Gastrocnemius medialis (tissue), 4 donors: ENCODE measurements at regions of chr15 and their contacts with region 1.

Region 1: GRCh38 chr15:27017168-27017809 is 46.3 kb downstream of the GABRG3 start:
- DNase-seq: no peak
- ATAC-seq: no peak
- H3K4me3 ChIP-seq: no peak overlapping the region
- H3K27ac ChIP-seq: no peak overlapping the region
- H3K4me1 ChIP-seq: no peaks in the 10 kb centered on the region
- H3K27me3 ChIP-seq: no peaks in the 10 kb centered on the region
- CTCF ChIP-seq: no peak
- POLR2A ChIP-seq: no peak

Region 2: GRCh38 chr15:26901041-26901440 is 116.2 kb before region 1 on chr15:
- in situ Hi-C with region 1: loop called in 1 of 4 experiments (anchors 25 kb)
- intact Hi-C with region 1: no loop called
- DNase-seq: no peak
- ATAC-seq: no peak
- H3K4me3 ChIP-seq: no peak overlapping the region
- H3K27ac ChIP-seq: no peak overlapping the region
- H3K4me1 ChIP-seq: no peaks in the 10 kb centered on the region
- H3K27me3 ChIP-seq: no peaks in the 10 kb centered on the region
- CTCF ChIP-seq: no peak
- POLR2A ChIP-seq: no peak

Region 3: DNA sequence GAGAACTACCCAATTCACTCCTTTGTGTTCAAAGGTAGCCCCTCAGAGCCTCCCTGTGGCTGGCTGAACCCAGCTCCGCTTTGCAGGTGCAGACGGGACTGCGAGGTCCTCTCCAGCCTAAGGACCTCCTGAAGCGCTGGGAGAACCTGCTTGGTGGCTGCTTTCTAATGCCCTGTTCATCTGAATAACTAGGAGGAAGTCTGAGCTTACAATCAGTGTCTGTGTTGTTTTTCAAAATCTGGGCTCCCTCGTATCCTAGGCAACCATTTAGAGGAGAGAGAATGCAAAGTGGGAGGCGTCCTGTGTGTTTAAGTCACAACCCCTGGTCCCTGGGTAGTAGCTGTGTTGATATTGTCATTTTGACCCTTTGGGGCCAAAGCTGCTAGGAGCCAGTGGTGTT is 53.6 kb after region 1 on chr15:
- in situ Hi-C with region 1: loop called in 1 of 4 experiments (anchors 10 kb)
- intact Hi-C with region 1: no loop called
- DNase-seq: no peak
- ATAC-seq: no peak
- H3K4me3 ChIP-seq: no peak overlapping the region
- H3K27ac ChIP-seq: no peak overlapping the region
- H3K4me1 ChIP-seq: no peaks in the 10 kb centered on the region
- H3K27me3 ChIP-seq: no peaks in the 10 kb centered on the region
- CTCF ChIP-seq: no peak
- POLR2A ChIP-seq: no peak